Mammary epithelial cell (primary cell): ENCODE measurements at regions of chr16 and their contacts with region 1.

Region 1: GRCh38 chr16:58589326-58589905 is 40.2 kb downstream of the CNOT1 start:
- DNase-seq: no peak
- H3K4me3 ChIP-seq: no peak overlapping the region
- H3K27ac ChIP-seq: no peak overlapping the region
- H3K4me1 ChIP-seq: no peaks in the 10 kb centered on the region
- H3K27me3 ChIP-seq: no peaks in the 10 kb centered on the region
- CTCF ChIP-seq: no peak

Region 2: GRCh38 chr16:58537124-58537906 is 52.1 kb before region 1 on chr16:
- CTCF ChIA-PET with region 1: no interaction called
- dilution Hi-C with region 1: loop called (anchors 5 kb)
- in situ Hi-C with region 1: no loop called
- intact Hi-C with region 1: no loop called
- DNase-seq: no peak
- H3K4me3 ChIP-seq: no peak overlapping the region
- H3K27ac ChIP-seq: no peak overlapping the region
- H3K4me1 ChIP-seq: no peaks in the 10 kb centered on the region
- H3K27me3 ChIP-seq: no peaks in the 10 kb centered on the region
- CTCF ChIP-seq: no peak

Region 3: DNA sequence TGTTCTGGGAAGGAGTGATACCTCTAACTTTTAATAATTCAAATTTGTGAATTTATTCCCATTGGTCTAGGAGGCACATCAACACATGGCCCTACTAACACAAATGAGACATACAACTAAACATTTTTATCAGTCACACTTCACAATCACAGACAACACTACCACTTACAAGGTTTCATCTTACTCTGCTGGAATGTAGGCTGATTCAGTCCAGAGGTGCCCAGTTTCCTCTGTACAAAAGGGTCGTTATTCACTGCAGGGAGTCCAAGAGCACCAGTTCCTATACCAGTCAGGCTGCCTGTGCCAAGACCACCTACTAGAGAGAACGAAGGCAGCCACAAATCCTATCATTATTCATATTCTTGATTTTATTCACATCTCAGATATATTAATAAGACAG is 32.7 kb before region 1 on chr16:
- CTCF ChIA-PET with region 1: no interaction called
- dilution Hi-C with region 1: no loop called
- in situ Hi-C with region 1: no loop called
- intact Hi-C with region 1: loop called (anchors 5 kb)
- DNase-seq: no peak
- H3K4me3 ChIP-seq: no peak overlapping the region
- H3K27ac ChIP-seq: no peak overlapping the region
- H3K4me1 ChIP-seq: no peaks in the 10 kb centered on the region
- H3K27me3 ChIP-seq: no peaks in the 10 kb centered on the region
- CTCF ChIP-seq: no peak